Activated CD4-positive, alpha-beta T cell treated with anti-CD3 and anti-CD28 coated beads, Interleukin-2, amount 10 ng/mL, durations not matched to agents 24 days and 14 days (primary cell): ENCODE measurements at regions of chr10 and their contacts with region 1.

Region 1: GRCh38 chr10:12419262-12419847 is 70.0 kb downstream of the CAMK1D start:
- DNase-seq: peak; percentile 78
- H3K4me3 Mint-ChIP-seq: no peak overlapping the region
- H3K27ac Mint-ChIP-seq: peak overlapping the region; percentile 58
- H3K4me1 Mint-ChIP-seq: peaks cover 12% of the 10 kb centered on the region
- H3K27me3 Mint-ChIP-seq: peaks cover 2% of the 10 kb centered on the region

Region 2: DNA sequence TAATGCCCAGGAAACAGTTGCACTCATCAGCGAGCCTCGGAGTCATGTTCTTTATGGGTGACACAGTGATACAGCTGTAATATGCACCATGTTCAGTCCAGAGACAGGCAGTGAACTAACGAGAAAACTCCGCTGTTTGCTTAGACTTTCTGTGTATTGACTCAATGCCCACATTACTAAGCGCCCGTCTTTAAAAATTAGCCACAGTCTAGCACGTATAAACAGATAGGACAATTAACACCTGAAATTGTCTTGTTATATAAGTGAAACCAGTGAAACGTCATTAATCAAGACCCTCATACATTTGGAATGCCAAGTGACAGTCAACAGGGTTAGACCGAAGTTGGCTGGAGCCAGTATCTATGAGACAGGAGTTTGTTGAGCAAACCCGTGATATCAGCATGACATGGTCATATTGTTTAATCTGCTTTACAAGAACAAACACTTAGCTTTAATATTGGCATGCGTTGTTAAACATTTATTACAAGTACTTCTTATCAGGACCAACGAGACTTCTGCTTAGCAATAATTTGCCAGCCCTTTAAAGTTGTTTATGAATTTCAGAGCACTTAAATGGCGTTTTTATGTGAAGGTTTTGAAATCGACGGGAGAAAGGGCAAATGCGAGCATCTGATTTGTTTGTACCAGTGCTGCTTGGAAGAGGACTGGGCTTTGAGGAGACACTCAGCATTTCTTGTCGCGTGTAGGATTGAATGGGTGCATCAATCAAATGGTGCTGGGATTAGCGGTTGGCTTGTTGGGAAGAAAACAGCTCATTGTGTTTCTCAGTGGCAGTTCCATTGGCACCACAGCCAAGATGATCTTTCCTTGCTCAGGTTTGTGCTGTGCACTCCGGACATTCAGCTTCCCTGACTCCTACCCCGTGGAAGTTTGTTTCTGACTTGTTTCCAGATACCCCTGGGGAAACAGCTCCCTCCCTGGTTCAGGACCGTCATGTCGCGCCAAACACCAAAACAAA is 13.7 kb before region 1 on chr10:
- intact Hi-C with region 1: loop called (anchors 1 kb)
- DNase-seq: no peak
- H3K4me3 Mint-ChIP-seq: no peak overlapping the region
- H3K27ac Mint-ChIP-seq: no peak overlapping the region
- H3K4me1 Mint-ChIP-seq: peaks cover 24% of the 10 kb centered on the region
- H3K27me3 Mint-ChIP-seq: peaks cover 3% of the 10 kb centered on the region

Region 3: GRCh38 chr10:13062803-13063202 is 643.4 kb after region 1 on chr10:
- intact Hi-C with region 1: no loop called
- DNase-seq: no peak
- H3K4me3 Mint-ChIP-seq: no peak overlapping the region
- H3K27ac Mint-ChIP-seq: no peak overlapping the region
- H3K4me1 Mint-ChIP-seq: no peaks in the 10 kb centered on the region
- H3K27me3 Mint-ChIP-seq: peaks cover 6% of the 10 kb centered on the region